Mucosa of descending colon (tissue), 3 donors: ENCODE measurements at regions of chr10 and their contacts with region 1.

Region 1: DNA sequence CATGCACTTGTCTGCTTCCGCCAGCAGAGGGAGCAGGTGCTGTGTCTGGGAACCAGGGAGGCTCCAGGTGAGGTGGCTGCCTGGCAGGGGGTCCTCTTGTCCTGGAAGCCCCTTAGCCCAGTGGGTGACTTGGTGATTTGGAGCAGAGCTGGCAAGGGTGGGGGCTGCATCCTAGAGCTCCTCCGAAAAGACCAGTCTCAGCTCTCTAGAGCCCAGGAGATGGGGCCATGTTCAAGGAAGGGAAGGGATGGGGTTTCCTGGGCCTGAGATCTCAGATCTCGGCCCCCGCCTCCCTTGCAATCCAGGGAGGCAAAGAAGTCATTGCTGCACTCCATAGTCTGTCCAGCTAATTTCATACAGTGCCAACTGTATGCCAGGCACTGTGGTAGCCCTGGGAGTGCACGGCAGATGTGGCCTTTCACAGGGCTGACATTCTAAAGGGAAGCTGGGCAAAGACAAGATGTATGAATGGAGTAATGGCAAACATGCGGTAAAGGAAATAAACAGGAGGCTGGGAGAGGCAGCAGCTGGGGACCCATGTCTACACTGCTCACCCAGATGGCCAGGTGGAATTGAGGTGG is 20.4 kb upstream of the SFRP5 start:
- DNase-seq: peak; percentile 64 to 78 (median 77)
- ATAC-seq: peak; percentile 62
- H3K4me3 ChIP-seq: no peak overlapping the region
- H3K4me1 ChIP-seq: no peaks in the 10 kb centered on the region
- CTCF ChIP-seq: peak; percentile 89

Region 2: DNA sequence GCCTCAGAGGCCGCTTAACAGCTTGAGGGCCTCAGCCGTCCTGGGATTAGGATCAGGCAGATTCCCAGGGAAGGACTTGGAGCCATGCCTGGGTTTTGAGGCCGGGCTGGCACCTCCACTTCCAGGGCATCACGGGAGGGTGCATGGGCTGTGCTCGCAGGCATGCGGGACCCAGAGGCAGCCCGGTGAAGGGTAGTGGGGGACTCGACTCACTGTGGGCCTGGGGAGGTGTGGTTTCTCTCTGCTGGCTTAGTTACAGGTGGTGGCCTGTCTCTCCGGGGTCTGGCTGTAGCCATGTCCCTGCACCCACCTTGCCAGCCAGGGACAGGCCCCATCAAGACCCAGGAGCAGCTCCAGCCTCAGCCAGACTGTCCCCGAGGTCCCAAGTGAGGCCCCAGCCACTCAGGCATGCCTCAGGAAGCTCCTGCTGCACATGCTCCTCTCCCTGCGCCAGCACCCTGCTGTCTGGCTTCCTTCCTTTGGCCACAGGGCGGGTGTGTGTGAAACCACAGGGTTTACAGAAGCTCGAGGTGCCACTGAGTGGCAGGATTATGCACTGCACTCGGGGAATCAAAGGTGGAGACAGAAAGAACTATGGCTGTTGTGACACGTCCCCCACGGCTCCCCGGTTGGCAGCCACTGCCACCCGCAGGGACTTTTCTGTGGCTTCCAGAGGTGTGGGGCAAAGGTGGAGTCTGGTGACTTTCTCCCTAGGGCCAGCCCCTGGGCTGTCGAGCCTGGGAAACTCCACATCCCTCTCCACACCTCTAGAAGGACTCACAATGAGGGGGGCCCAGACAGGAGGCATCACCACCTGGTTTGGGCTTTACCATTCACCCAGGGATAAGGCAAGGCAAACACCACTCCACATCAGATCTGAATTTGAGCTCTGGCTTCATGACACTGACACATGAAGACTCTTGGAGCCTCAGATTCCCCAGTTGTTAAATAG is 77.1 kb after region 1 on chr10:
- intact Hi-C with region 1: loop called in 1 of 2 experiments (anchors 5 kb)
- DNase-seq: peak; percentile 80 to 86 (median 84)
- ATAC-seq: peak; percentile 97
- H3K4me3 ChIP-seq: no peak overlapping the region
- H3K4me1 ChIP-seq: no peaks in the 10 kb centered on the region
- CTCF ChIP-seq: peak; percentile 39